Naive thymus-derived CD4-positive, alpha-beta T cell (primary cell): ENCODE measurements at regions of chr16 and their contacts with region 1.

Region 1: GRCh38 chr16:74709441-74709877 is 8.8 kb upstream of the MLKL start:
- DNase-seq: peak; percentile 62 to 86 (median 78)
- ATAC-seq: peak; percentile 99
- H3K4me3 ChIP-seq: no peak overlapping the region
- H3K4me3 Mint-ChIP-seq: no peak overlapping the region
- H3K27ac ChIP-seq: no peak overlapping the region
- H3K27ac Mint-ChIP-seq: peak overlapping the region in 5 of 9 donors; percentile 3 to 85 (median 29)
- H3K4me1 ChIP-seq: no peaks in the 10 kb centered on the region
- H3K4me1 Mint-ChIP-seq: peaks cover 4 to 10% (median 6%) of the 10 kb centered on the region in 7 donors
- H3K27me3 ChIP-seq: no peaks in the 10 kb centered on the region
- H3K27me3 Mint-ChIP-seq: peaks cover 0 to 6% (median 0%) of the 10 kb centered on the region in 5 donors

Region 2: DNA sequence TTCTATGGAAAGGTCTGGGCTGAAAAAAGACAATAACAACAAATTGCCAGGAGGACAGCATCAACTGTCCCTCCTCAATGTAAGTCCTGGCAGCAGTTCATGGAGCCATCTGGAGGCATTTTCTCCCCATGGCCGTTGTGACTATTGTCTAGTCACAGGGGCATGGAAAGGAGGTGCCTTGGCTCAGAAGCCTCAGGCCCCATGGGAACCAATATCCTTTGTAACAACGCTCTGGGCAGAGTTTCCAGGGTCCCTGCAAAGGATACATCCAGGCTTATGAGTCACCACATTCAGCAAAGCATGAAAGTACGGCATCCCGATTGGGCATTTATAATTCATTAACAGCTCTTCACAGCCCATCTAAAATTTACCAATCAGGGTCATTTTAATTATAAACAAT is 187.8 kb before region 1 on chr16:
- CTCF ChIA-PET with region 1: no interaction called
- POLR2A ChIA-PET with region 1: no interaction called
- intact Hi-C with region 1: no loop called
- DNase-seq: no peak
- ATAC-seq: no peak
- H3K4me3 ChIP-seq: no peak overlapping the region
- H3K4me3 Mint-ChIP-seq: no peak overlapping the region
- H3K27ac ChIP-seq: no peak overlapping the region
- H3K27ac Mint-ChIP-seq: peak overlapping the region in 6 of 9 donors; percentile 2 to 87 (median 10)
- H3K4me1 ChIP-seq: no peaks in the 10 kb centered on the region
- H3K4me1 Mint-ChIP-seq: peaks cover 0 to 51% (median 27%) of the 10 kb centered on the region in 7 donors
- H3K27me3 ChIP-seq: no peaks in the 10 kb centered on the region
- H3K27me3 Mint-ChIP-seq: no peaks in the 10 kb centered on the region

Region 3: DNA sequence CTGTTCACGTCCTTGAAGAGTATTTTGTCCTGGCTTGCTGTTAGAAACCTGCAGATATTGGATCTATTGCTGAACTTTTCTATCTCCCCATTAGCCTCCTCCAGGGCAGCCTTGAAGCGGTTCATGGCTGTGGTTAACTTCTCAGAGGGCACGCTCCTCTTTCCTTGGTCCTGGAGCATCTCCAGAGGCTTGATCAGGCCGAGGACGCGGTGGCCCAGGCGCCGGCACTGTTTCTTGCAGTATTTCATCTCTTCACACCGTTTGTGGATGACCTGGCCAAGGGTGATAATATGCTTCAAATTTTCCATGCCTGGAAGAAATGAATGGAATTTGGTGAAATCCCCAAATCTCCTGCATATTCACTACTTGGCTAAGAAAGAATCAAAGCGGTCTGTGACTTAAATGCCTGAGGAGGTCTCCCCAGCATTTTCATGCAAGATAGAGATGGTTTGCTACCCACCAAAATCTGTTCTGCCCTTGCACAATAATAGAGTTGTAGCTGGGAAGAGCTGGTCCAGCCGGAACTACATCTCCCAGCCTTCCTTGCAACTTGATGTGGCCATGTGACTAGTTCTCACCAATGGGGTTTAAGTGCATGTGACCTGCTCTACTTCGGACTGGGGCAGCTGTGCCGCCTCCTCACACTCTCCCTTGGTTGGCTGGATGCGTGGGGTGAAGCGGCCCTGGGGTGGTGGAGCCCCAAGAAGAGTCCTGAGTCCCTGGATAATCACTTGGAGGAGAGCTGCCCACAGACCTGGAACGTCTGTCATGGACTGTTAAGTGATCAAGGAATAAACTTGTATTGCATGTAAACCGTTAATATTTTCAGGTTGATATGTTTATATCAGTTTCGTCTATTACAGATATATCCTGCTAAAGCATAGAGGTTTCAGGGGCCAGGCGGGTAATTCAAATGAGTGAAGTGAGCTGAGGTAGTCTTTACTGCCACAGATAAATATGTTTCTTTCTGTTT is 13.7 kb before region 1 on chr16:
- CTCF ChIA-PET with region 1: interaction called, 10 read pairs
- POLR2A ChIA-PET with region 1: interaction called, 11 read pairs
- intact Hi-C with region 1: no loop called
- DNase-seq: peak; percentile 33 to 67 (median 51)
- ATAC-seq: peak; percentile 89
- H3K4me3 ChIP-seq: peak overlapping the region; percentile 45
- H3K4me3 Mint-ChIP-seq: peak overlapping the region; percentile 74 to 94 (median 85)
- H3K27ac ChIP-seq: peak overlapping the region; percentile 45
- H3K27ac Mint-ChIP-seq: peak overlapping the region in 8 of 9 donors; percentile 43 to 87 (median 80)
- H3K4me1 ChIP-seq: peaks cover 14 to 24% of the 10 kb centered on the region in 2 donors
- H3K4me1 Mint-ChIP-seq: peaks cover 35 to 74% (median 59%) of the 10 kb centered on the region in 7 donors
- H3K27me3 ChIP-seq: no peaks in the 10 kb centered on the region
- H3K27me3 Mint-ChIP-seq: no peaks in the 10 kb centered on the region

Region 4: GRCh38 chr16:74813109-74813641 is 103.7 kb after region 1 on chr16:
- CTCF ChIA-PET with region 1: no interaction called
- POLR2A ChIA-PET with region 1: no interaction called
- intact Hi-C with region 1: loop called in 1 of 2 experiments (anchors 1 kb)
- DNase-seq: peak; percentile 26 to 79 (median 61)
- ATAC-seq: peak; percentile 99
- H3K4me3 ChIP-seq: no peak overlapping the region
- H3K4me3 Mint-ChIP-seq: peak overlapping the region in 3 of 10 donors; percentile 15 to 30 (median 21)
- H3K27ac ChIP-seq: no peak overlapping the region
- H3K27ac Mint-ChIP-seq: no peak overlapping the region
- H3K4me1 ChIP-seq: no peaks in the 10 kb centered on the region
- H3K4me1 Mint-ChIP-seq: peaks cover 0 to 5% (median 0%) of the 10 kb centered on the region in 7 donors
- H3K27me3 ChIP-seq: no peaks in the 10 kb centered on the region
- H3K27me3 Mint-ChIP-seq: peaks cover 0 to 12% (median 0%) of the 10 kb centered on the region in 5 donors

Region 5: GRCh38 chr16:74862741-74863244 is 153.3 kb after region 1 on chr16:
- CTCF ChIA-PET with region 1: interaction called, 10 read pairs
- POLR2A ChIA-PET with region 1: no interaction called
- intact Hi-C with region 1: loop called in 1 of 2 experiments (anchors 1 kb)
- DNase-seq: peak in 6 of 9 donors; percentile 16 to 40 (median 30)
- ATAC-seq: peak; percentile 57
- H3K4me3 ChIP-seq: no peak overlapping the region
- H3K4me3 Mint-ChIP-seq: no peak overlapping the region
- H3K27ac ChIP-seq: no peak overlapping the region
- H3K27ac Mint-ChIP-seq: peak overlapping the region in 1 of 9 donors; percentile 55
- H3K4me1 ChIP-seq: peaks cover 0 to 7% of the 10 kb centered on the region in 2 donors
- H3K4me1 Mint-ChIP-seq: peaks cover 7 to 19% (median 11%) of the 10 kb centered on the region in 7 donors
- H3K27me3 ChIP-seq: no peaks in the 10 kb centered on the region
- H3K27me3 Mint-ChIP-seq: peaks cover 0 to 5% (median 0%) of the 10 kb centered on the region in 5 donors

Region 6: GRCh38 chr16:75385507-75386152 is 676.2 kb after region 1 on chr16:
- CTCF ChIA-PET with region 1: no interaction called
- POLR2A ChIA-PET with region 1: no interaction called
- intact Hi-C with region 1: loop called in 1 of 2 experiments (anchors 10 kb)
- DNase-seq: peak in 7 of 9 donors; percentile 35 to 71 (median 55)
- ATAC-seq: peak; percentile 67
- H3K4me3 ChIP-seq: no peak overlapping the region
- H3K4me3 Mint-ChIP-seq: no peak overlapping the region
- H3K27ac ChIP-seq: no peak overlapping the region
- H3K27ac Mint-ChIP-seq: peak overlapping the region in 1 of 9 donors; percentile 59
- H3K4me1 ChIP-seq: peaks cover 4 to 14% of the 10 kb centered on the region in 2 donors
- H3K4me1 Mint-ChIP-seq: peaks cover 9 to 25% (median 20%) of the 10 kb centered on the region in 7 donors
- H3K27me3 ChIP-seq: no peaks in the 10 kb centered on the region
- H3K27me3 Mint-ChIP-seq: peaks cover 0 to 17% (median 0%) of the 10 kb centered on the region in 5 donors

Region 7: DNA sequence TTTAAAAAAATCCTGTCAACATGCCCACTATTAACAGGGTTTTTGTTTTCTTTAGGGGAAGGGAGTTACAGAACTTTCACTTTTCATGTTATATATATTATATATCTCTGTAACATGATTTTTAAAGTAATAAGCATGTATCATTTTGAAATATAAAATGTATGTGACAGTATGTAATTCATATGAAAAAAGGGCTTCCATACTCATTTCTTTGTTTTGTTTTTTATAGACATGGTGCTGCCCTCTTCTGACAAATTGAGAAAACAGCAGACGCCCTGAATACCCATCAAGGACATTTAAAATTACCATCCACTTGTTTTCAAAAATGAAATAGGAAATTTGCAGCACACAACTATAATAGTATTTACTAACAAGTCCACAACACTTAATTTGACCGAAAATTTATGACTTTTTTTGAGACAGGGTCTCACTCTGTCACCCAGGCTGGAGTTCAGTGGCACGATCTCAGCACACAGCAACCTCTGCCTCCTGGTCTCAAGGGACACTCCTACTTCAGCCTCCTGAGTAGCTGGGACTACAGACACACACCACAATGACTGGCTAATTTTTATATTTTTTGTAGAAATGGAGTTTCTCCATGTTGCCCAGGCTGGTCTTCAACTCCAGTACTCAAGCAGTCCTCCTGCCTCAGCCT is 693.5 kb after region 1 on chr16:
- CTCF ChIA-PET with region 1: no interaction called
- POLR2A ChIA-PET with region 1: interaction called, 7 read pairs
- intact Hi-C with region 1: loop called in 1 of 2 experiments (anchors 10 kb)
- DNase-seq: peak in 5 of 9 donors; percentile 20 to 45 (median 31)
- ATAC-seq: peak; percentile 69
- H3K4me3 ChIP-seq: no peak overlapping the region
- H3K4me3 Mint-ChIP-seq: no peak overlapping the region
- H3K27ac ChIP-seq: no peak overlapping the region
- H3K27ac Mint-ChIP-seq: peak overlapping the region in 1 of 9 donors; percentile 47
- H3K4me1 ChIP-seq: no peaks in the 10 kb centered on the region
- H3K4me1 Mint-ChIP-seq: peaks cover 0 to 6% (median 0%) of the 10 kb centered on the region in 7 donors
- H3K27me3 ChIP-seq: no peaks in the 10 kb centered on the region
- H3K27me3 Mint-ChIP-seq: no peaks in the 10 kb centered on the region